A673 (cell line): ENCODE measurements at regions of chr21 and their contacts with region 1.

Region 1: DNA sequence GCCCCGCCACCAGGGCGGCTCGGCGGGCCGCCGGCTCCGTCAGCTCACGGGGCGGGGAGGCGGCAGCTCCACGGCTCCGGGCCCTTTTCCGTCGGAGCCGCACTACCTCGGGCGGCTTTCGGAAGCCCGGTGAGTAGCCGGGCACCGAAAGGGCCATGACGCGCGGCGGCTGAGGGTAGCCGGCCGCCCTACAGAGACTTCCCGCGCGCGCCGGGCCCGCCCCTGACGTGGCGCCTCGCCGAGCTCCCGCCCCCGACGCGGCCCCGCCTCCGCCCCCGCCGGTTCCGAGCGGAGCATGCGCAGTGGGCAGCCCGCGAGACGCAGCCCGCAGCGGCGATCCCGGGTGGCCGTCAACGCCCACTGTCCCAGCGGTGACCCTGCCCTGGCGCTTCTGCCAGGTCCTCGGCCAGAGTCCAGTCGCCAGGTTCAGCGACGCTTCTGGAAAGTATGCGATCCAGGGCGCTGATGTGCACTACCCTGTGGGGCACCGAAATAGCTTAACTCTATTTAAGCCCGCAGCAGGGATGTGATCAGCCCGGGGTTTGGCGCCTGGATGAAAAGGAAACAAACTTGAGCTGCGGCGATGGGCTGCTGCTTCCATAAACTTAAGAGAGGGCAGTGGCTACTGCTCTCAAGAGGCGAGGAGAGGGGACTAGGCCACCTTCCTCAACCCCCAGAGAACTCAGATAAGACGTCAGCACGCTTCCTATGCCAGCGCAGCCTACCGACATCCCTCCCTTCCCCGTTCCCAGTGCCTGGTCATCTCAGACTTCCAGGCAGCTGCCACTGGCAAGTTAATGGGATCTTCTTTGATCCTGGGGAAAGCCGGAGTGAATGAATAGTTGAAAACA is at the start of gene DONSON:
- DNase-seq: peak; percentile 87
- H3K4me3 ChIP-seq: peak within 1 kb of the TSS; percentile 98
- H3K27ac ChIP-seq: peak within 1 kb of the TSS; percentile 96
- H3K4me1 ChIP-seq: peaks cover 8% of the 10 kb centered on the region
- H3K27me3 ChIP-seq: no peaks in the 10 kb centered on the region
- CTCF ChIP-seq: no peak
- total RNA-seq, gene DONSON: 42.6 and 48.5 TPM in 2 replicates

Region 2: DNA sequence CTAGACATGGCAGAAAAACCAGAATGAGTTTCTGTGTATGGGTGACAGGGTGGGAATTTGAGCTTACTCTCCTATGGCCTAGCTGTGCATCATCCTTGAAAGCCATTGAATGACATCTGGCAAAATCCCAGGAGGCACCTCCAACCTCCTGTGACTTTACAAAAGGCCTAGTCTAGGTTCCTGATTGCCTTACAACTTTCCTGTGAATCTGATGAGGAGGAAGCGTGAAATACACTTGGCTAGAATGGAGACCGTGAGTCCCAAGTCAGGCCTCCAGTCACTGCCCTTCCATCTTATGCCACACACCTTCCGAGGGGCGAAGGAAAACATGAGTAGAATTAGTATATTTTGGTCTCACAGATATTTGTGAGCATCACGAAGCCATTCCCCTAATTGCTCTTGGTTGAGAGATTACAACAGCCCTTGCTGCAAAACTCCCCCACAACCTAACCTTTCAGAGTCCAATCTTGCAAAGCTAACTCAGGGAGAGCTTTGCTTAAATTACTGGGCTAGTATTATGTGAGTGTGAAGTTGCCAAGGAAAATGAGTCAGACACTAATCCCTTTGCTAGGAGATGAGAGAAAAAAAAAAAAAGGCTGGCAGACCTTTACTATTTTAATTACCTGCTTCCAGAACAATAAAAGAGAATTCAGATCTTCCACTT is 780.9 kb before region 1 on chr21:
- CTCF ChIA-PET with region 1: no interaction called
- POLR2A ChIA-PET with region 1: interaction called, 11 read pairs
- intact Hi-C with region 1: no loop called
- DNase-seq: peak; percentile 79
- H3K4me3 ChIP-seq: no peak overlapping the region
- H3K27ac ChIP-seq: no peak overlapping the region
- H3K4me1 ChIP-seq: peaks cover 17% of the 10 kb centered on the region
- H3K27me3 ChIP-seq: no peaks in the 10 kb centered on the region
- CTCF ChIP-seq: no peak

Region 3: DNA sequence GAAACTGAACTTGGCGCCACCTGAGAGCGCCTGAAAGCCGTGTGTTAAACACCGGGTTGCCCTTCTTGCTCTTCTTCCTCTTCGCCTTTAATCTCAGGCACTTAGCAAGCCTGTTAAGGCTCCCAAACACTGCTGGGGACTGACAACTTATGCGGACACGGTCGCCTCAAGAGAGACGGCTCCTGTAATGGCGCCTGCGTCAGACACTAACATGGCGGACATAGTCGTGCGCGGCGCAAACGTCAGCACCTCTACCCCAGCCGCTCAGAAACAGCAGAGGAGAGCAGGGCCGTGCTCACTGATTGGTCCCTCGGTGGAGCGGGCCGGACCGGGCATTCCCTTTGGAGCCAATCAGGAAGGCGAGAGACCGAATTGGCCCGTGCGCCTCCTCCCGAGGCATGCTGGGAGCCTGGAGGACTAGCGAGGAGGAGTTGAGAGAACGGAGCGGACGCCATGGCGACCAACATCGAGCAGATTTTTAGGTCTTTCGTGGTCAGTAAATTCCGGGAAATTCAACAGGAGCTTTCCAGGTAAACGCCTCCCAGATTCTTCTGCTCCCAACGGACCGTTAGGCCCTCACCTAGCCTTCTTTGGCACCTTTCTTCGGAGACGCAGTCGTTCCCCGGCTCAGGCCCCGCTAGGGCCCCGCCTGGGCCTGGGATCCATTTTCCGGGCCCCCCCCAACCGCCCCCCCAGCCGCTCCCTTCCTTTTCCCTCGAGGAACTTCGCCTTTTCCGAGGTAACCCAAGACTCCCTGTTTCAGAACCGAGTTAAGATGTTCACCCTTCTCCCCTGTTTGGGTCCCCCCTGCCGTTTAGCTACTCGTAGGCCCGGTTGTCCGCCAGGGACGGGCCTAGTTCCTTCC is 45.8 kb before region 1 on chr21 and contains the start of gene SON:
- CTCF ChIA-PET with region 1: no interaction called
- POLR2A ChIA-PET with region 1: no interaction called
- intact Hi-C with region 1: loop called (anchors 5 kb)
- DNase-seq: peak; percentile 100
- H3K4me3 ChIP-seq: peak within 1 kb of the TSS; percentile 59
- H3K27ac ChIP-seq: peak within 1 kb of the TSS; percentile 98
- H3K4me1 ChIP-seq: peaks cover 20% of the 10 kb centered on the region
- H3K27me3 ChIP-seq: no peaks in the 10 kb centered on the region
- CTCF ChIP-seq: no peak
- total RNA-seq, gene SON: 322 and 328 TPM in 2 replicates